ENCODE measurements at regions of chr11 and their contacts with region 1.

Region 1: GRCh38 chr11:101848262-101848661 is 66.5 kb upstream of the CEP126 start:
- H3K4me3 Mint-ChIP-seq: no peak overlapping the region
- H3K27ac Mint-ChIP-seq: no peak overlapping the region
- H3K4me1 Mint-ChIP-seq: no peaks in the 10 kb centered on the region
- H3K27me3 Mint-ChIP-seq: no peaks in the 10 kb centered on the region

Region 2: GRCh38 chr11:101336858-101337257 is 511.4 kb before region 1 on chr11:
- intact Hi-C with region 1: no loop called
- H3K4me3 Mint-ChIP-seq: no peak overlapping the region
- H3K27ac Mint-ChIP-seq: no peak overlapping the region
- H3K4me1 Mint-ChIP-seq: no peaks in the 10 kb centered on the region
- H3K27me3 Mint-ChIP-seq: no peaks in the 10 kb centered on the region

Region 3: DNA sequence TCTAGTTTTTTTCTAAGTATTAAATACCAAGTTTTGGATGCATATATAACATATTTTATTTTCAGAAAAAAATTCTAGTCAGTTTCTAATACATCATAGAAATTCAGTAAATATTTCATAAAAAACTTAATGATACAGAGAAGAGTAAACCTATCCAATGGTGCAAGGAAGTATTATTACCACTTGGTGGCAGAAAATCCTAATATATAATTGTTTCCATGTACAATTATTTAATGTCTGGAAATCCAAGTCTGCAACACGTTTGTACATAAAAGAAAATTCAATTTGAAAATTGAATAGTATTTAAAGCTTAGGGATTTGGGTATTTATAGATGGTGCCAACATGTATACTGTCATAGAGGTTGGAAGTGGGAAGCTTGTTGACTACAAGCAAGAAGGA is 391.4 kb before region 1 on chr11:
- intact Hi-C with region 1: loop called (anchors 5 kb)
- H3K4me3 Mint-ChIP-seq: no peak overlapping the region
- H3K27ac Mint-ChIP-seq: no peak overlapping the region
- H3K4me1 Mint-ChIP-seq: no peaks in the 10 kb centered on the region
- H3K27me3 Mint-ChIP-seq: no peaks in the 10 kb centered on the region

Measured in dendritic cell treated with granulocyte-macrophage colony-stimulating factor and Interleukin-4, amounts not matched to agents 40 ng/mL and 50 ng/mL, for 4 days (primary cell).